CD4-positive, alpha-beta memory T cell (primary cell): ENCODE measurements at regions of chr11 and their contacts with region 1.

Region 1: DNA sequence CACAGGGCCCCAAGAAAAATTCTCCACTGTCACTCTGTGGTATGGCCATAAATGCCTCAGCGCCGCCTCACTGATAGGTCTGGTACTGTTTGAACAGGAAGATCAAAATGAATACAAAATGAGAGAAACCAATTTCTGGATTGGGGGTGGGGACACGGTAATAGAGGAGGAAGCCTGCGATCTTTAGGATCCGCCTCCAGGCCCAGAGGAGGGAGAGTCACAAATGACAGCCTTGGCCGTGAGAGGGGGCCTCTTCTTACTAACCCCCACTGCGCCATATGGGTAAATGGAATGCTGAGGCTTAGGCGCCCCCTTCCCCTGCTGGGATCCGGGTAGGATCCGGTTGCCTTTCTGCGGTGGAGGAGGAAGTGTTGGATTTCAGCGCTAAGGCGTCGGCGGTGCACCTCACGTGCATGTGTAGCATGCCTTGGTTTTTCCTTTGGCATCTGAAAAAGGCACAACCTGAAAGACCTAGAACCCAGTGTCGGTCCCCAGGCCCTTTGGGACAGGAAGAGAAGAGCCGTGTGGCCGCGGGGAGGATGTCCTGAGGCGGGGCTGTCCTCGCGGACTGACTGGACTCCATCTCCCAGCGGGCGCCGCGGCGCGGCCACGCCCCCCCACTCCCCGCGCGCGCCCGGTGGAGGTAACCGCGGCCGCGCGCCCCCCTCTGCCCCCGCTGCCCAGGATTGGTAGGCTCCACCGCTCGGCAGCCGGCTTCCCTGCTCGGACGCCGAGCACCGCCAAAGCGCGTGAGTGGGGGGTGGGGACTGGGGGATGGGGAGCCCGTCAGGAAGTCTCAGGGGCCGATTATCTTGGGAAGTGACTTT is 718 bp upstream of the MADD start:
- DNase-seq: peak; percentile 84 to 90 (median 87)
- H3K4me3 ChIP-seq: peak overlapping the region; percentile 59 to 90
- H3K4me3 Mint-ChIP-seq: peak overlapping the region; percentile 87 to 95 (median 92)
- H3K27ac ChIP-seq: peak overlapping the region; percentile 79
- H3K27ac Mint-ChIP-seq: peak overlapping the region; percentile 94 to 100 (median 96)
- H3K4me1 ChIP-seq: peaks cover 53% of the 10 kb centered on the region
- H3K4me1 Mint-ChIP-seq: peaks cover 41 to 60% (median 52%) of the 10 kb centered on the region in 4 donors
- H3K27me3 ChIP-seq: no peaks in the 10 kb centered on the region
- H3K27me3 Mint-ChIP-seq: no peaks in the 10 kb centered on the region

Region 2: GRCh38 chr11:46554205-46555055 is 714.8 kb before region 1 on chr11:
- CTCF ChIA-PET with region 1: no interaction called
- POLR2A ChIA-PET with region 1: no interaction called
- intact Hi-C with region 1: no loop called
- DNase-seq: no peak
- H3K4me3 ChIP-seq: no peak overlapping the region
- H3K4me3 Mint-ChIP-seq: peak overlapping the region; percentile 20 to 77 (median 36)
- H3K27ac ChIP-seq: no peak overlapping the region
- H3K27ac Mint-ChIP-seq: peak overlapping the region; percentile 64 to 92 (median 77)
- H3K4me1 ChIP-seq: peaks cover 55% of the 10 kb centered on the region
- H3K4me1 Mint-ChIP-seq: peaks cover 47 to 68% (median 58%) of the 10 kb centered on the region in 4 donors
- H3K27me3 ChIP-seq: no peaks in the 10 kb centered on the region
- H3K27me3 Mint-ChIP-seq: no peaks in the 10 kb centered on the region

Region 3: DNA sequence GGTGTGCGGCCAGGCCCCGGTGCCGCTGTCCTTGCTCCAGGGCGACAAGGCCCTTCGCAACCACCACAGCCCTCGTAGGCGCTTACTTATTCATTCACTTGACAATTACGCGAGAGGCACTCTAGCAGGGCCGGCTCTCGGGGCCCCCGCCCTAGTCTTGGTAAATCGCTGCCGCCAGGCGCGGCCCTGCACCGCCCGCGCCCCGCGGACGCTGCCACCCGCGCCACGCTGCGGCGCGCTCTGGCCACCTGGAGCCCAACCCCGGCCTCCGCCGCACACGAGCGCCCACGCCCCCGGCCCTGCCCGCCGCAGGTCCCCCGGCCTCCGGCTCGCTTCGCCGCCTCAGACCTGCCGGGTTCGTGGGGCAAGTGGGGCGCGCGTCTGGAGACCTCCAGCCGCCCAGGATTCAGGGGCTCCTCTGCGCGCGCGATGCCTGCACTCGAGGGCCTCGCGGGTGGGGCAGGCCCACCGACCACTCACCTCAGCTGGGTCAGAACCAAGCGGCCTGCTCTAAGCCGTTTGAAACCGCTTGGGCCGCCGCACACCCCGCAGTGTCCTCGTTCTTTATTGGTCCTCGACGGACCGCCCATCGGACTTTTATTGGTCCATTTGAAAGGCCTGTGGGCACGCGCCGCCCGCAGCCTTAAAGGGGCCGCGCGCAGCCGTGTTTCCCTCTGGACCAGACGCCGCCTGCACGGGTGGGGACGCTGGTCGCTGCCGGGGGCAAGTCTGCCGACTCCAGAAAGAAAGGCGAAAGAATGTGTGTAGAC is 423.3 kb before region 1 on chr11 and contains the start of gene CKAP5:
- CTCF ChIA-PET with region 1: no interaction called
- POLR2A ChIA-PET with region 1: no interaction called
- intact Hi-C with region 1: loop called (anchors 1 kb)
- DNase-seq: peak; percentile 83 to 88 (median 84)
- H3K4me3 ChIP-seq: peak within 1 kb of the TSS; percentile 85 to 91
- H3K4me3 Mint-ChIP-seq: peak within 1 kb of the TSS; percentile 93 to 99 (median 98)
- H3K27ac ChIP-seq: peak within 1 kb of the TSS; percentile 64
- H3K27ac Mint-ChIP-seq: peak within 1 kb of the TSS; percentile 86 to 98 (median 95)
- H3K4me1 ChIP-seq: peaks cover 29% of the 10 kb centered on the region
- H3K4me1 Mint-ChIP-seq: peaks cover 17 to 46% (median 30%) of the 10 kb centered on the region in 4 donors
- H3K27me3 ChIP-seq: no peaks in the 10 kb centered on the region
- H3K27me3 Mint-ChIP-seq: no peaks in the 10 kb centered on the region
- total RNA-seq, gene CKAP5: 47.8 to 51.4 TPM

Region 4: DNA sequence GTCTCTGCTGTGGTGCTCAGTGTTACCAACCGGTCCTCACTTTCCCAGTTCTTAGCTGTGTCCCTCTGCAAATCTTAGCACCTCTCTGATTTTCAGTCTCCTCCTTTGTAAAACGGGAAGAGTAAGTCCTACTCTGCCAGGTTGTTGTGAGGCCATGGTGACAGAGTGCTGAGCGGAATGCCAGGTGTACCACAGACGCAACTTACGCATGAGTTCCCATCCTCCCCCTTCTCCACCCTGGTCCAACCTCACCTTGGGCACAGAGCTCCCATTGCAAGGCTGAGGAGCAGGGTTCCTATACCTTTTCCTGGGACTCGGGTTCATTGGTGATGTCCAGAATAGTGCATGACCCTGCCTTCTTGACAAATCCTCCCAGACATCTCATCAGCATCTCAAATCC is 61.8 kb before region 1 on chr11:
- CTCF ChIA-PET with region 1: no interaction called
- POLR2A ChIA-PET with region 1: no interaction called
- intact Hi-C with region 1: no loop called
- DNase-seq: no peak
- H3K4me3 ChIP-seq: no peak overlapping the region
- H3K4me3 Mint-ChIP-seq: no peak overlapping the region
- H3K27ac ChIP-seq: no peak overlapping the region
- H3K27ac Mint-ChIP-seq: no peak overlapping the region
- H3K4me1 ChIP-seq: no peaks in the 10 kb centered on the region
- H3K4me1 Mint-ChIP-seq: no peaks in the 10 kb centered on the region
- H3K27me3 ChIP-seq: no peaks in the 10 kb centered on the region
- H3K27me3 Mint-ChIP-seq: peaks cover 0 to 4% of the 10 kb centered on the region in 2 donors

Region 5: GRCh38 chr11:47233989-47234668 is 35.1 kb before region 1 on chr11:
- CTCF ChIA-PET with region 1: interaction called, 9 read pairs
- POLR2A ChIA-PET with region 1: interaction called, 12 read pairs
- intact Hi-C with region 1: loop called (anchors 1 kb)
- DNase-seq: peak in 4 of 5 donors; percentile 11 to 61 (median 21)
- H3K4me3 ChIP-seq: no peak overlapping the region
- H3K4me3 Mint-ChIP-seq: peak overlapping the region; percentile 56 to 82 (median 70)
- H3K27ac ChIP-seq: peak overlapping the region; percentile 75
- H3K27ac Mint-ChIP-seq: peak overlapping the region; percentile 92 to 99 (median 97)
- H3K4me1 ChIP-seq: peaks cover 25% of the 10 kb centered on the region
- H3K4me1 Mint-ChIP-seq: peaks cover 7 to 32% (median 23%) of the 10 kb centered on the region in 4 donors
- H3K27me3 ChIP-seq: no peaks in the 10 kb centered on the region
- H3K27me3 Mint-ChIP-seq: no peaks in the 10 kb centered on the region

Region 6: GRCh38 chr11:47407746-47408590 is 138.8 kb after region 1 on chr11 and contains the start of gene SLC39A13:
- CTCF ChIA-PET with region 1: interaction called, 6 read pairs
- POLR2A ChIA-PET with region 1: interaction called, 3 read pairs
- intact Hi-C with region 1: loop called (anchors 1 kb)
- DNase-seq: peak; percentile 88 to 94 (median 90)
- H3K4me3 ChIP-seq: peak within 1 kb of the TSS; percentile 34 to 73
- H3K4me3 Mint-ChIP-seq: peak within 1 kb of the TSS; percentile 89 to 97 (median 92)
- H3K27ac ChIP-seq: peak within 1 kb of the TSS; percentile 80
- H3K27ac Mint-ChIP-seq: peak within 1 kb of the TSS; percentile 92 to 97 (median 94)
- H3K4me1 ChIP-seq: peaks cover 25% of the 10 kb centered on the region
- H3K4me1 Mint-ChIP-seq: peaks cover 10 to 27% (median 20%) of the 10 kb centered on the region in 4 donors
- H3K27me3 ChIP-seq: no peaks in the 10 kb centered on the region
- H3K27me3 Mint-ChIP-seq: no peaks in the 10 kb centered on the region
- total RNA-seq, gene SLC39A13: 63.6 to 68.3 TPM

Region 7: DNA sequence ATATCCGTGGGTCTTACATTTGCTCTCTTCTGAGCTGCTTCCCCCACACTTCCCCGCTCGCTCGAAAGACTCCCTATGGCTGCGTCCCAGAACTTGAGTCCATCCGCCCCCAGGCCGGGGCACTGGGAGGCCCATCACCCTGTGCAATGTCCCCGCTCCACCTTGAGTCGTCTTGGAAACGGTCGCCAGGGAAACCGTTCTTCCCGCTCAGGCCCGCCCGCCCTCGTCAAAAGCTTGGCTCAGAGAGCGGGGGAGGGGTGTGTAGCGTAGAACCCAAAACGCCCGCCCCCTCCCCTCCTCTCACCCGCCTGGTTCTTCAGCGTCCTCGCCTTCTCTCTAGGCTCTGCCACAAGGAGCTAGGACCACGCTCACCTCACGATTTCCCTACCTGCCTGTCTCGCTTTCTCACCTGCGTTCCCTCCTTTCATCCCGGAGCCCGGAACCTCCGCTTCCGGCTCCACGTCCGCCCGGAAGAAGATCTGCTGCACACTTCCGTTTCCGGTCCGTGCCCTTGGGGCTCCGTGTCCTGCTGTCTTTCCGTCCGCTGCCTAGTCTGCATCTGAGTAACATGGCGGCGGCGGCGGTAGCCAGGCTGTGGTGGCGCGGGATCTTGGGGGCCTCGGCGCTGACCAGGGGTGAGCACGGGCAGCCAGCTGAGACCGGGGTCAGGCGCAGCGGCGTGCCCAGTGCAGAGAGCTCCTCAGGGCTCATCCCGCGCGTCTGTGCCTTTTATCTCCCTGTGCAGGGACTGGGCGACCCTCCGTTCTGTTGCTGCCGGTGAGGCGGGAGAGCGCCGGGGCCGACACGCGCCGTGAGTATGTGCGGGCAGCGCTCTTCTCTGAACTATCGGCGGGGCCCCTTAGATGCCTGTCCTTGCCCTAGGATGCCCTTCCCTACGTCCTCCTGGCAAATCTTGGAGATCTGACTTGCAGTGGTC is 309.6 kb after region 1 on chr11 and contains the starts of genes KBTBD4 and NDUFS3:
- CTCF ChIA-PET with region 1: no interaction called
- POLR2A ChIA-PET with region 1: interaction called, 3 read pairs
- intact Hi-C with region 1: loop called (anchors 5 kb)
- DNase-seq: peak; percentile 87 to 90 (median 88)
- H3K4me3 ChIP-seq: peak within 1 kb of the TSS; percentile 80 to 93
- H3K4me3 Mint-ChIP-seq: peak within 1 kb of the TSS; percentile 97 to 100 (median 100)
- H3K27ac ChIP-seq: peak within 1 kb of the TSS; percentile 83
- H3K27ac Mint-ChIP-seq: peak within 1 kb of the TSS; percentile 96 to 100 (median 100)
- H3K4me1 ChIP-seq: peaks cover 42% of the 10 kb centered on the region
- H3K4me1 Mint-ChIP-seq: peaks cover 19 to 48% (median 35%) of the 10 kb centered on the region in 4 donors
- H3K27me3 ChIP-seq: no peaks in the 10 kb centered on the region
- H3K27me3 Mint-ChIP-seq: peaks cover 0 to 1% of the 10 kb centered on the region in 2 donors
- total RNA-seq, gene KBTBD4: 21.2 to 22.5 TPM
- total RNA-seq, gene NDUFS3: 70.9 to 71.0 TPM

Region 8: DNA sequence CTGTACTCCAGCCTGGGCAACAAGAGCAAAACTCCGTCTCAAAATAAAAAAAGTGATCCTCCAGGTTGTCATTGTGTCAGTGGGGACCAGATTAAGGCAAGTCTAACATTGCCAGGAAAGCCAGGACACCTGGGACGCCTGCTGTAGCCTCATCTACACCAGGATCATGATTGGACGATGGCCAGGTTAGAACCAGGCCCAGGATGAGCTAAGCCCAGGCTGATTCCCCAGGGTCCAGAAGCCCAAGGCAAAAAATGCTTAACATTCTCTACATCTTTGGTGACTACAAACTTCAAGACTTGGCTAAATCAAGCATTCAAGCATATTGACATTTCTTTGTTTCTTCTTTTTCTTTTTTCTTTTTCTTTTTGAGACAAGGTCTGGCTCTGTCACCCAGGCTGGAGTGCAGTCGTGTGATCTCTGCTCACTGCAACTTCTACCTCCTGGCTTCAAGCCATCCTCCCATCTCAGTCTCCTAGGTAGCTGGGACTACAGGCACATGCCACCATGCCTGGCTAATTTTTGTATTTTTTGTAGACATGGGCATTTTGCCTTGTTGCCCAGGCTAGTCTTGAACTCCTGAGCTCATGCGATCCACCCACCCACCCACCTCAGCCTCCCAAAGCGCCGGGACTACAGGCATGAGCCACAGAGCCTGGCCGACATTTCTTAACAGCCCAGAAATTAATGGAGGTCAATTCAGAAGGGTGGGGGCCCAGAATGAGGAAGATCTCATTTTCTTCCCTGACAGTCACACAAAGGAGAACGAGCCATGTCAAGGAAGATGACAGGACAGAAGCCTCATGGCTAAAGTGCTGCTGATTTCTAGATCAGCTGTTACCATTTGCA is 698.6 kb after region 1 on chr11:
- CTCF ChIA-PET with region 1: no interaction called
- POLR2A ChIA-PET with region 1: no interaction called
- intact Hi-C with region 1: no loop called
- DNase-seq: no peak
- H3K4me3 ChIP-seq: no peak overlapping the region
- H3K4me3 Mint-ChIP-seq: no peak overlapping the region
- H3K27ac ChIP-seq: no peak overlapping the region
- H3K27ac Mint-ChIP-seq: no peak overlapping the region
- H3K4me1 ChIP-seq: no peaks in the 10 kb centered on the region
- H3K4me1 Mint-ChIP-seq: no peaks in the 10 kb centered on the region
- H3K27me3 ChIP-seq: no peaks in the 10 kb centered on the region
- H3K27me3 Mint-ChIP-seq: no peaks in the 10 kb centered on the region